ENCODE measurements at regions of chr7 and their contacts with region 1.

Region 1: GRCh38 chr7:70775570-70776156 is 356.3 kb upstream of the GALNT17 start:
- DNase-seq: no peak
- ATAC-seq: peak; percentile 43
- H3K4me3 Mint-ChIP-seq: no peak overlapping the region
- H3K27ac Mint-ChIP-seq: no peak overlapping the region
- H3K4me1 Mint-ChIP-seq: peaks cover 40% of the 10 kb centered on the region
- H3K27me3 Mint-ChIP-seq: peaks cover 4% of the 10 kb centered on the region

Region 2: DNA sequence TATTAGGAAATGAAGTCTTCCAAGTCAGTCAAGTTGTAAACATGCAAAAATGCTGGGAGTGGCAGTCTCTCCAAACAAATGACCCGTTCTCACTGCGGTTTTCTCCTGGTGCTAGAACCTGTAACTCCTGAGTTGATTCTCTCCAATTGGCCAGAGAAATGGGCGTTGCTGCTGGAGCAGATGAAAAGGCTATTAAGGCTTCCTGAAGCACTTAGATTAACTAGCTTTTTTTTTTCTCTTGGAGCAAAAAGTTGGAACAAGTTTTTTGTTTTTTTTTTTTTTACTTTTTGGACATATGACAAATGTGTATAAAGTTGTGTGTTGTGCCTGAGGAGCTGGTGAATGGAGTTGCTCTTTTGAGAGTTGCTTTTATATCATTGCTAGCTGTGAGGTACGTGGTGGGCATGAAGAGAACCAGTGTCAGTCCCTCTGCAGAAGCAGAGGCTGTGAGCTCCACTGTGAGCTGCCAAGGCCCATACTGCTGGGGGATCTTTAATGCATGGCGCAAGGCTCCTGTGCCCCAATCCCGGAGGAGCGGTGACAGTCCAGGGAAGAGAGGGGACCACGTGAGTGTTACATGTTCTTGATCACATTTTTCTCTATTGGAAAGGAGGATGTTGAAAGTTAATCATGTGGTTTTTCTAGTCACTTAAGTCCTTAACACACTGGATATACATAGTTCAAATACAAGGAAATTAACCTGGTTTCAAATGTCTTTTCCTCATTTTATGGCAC is 37.3 kb before region 1 on chr7:
- CTCF ChIA-PET with region 1: no interaction called
- POLR2A ChIA-PET with region 1: no interaction called
- intact Hi-C with region 1: loop called in 1 of 2 experiments (anchors 5 kb)
- DNase-seq: no peak
- ATAC-seq: no peak
- H3K4me3 Mint-ChIP-seq: no peak overlapping the region
- H3K27ac Mint-ChIP-seq: no peak overlapping the region
- H3K4me1 Mint-ChIP-seq: peaks cover 14% of the 10 kb centered on the region
- H3K27me3 Mint-ChIP-seq: no peaks in the 10 kb centered on the region

Measured in activated CD4-positive, alpha-beta T cell treated with anti-CD3 and anti-CD28 coated beads for 36 hours (primary cell).